ENCODE measurements at regions of chr13 and their contacts with region 1.

Region 1: DNA sequence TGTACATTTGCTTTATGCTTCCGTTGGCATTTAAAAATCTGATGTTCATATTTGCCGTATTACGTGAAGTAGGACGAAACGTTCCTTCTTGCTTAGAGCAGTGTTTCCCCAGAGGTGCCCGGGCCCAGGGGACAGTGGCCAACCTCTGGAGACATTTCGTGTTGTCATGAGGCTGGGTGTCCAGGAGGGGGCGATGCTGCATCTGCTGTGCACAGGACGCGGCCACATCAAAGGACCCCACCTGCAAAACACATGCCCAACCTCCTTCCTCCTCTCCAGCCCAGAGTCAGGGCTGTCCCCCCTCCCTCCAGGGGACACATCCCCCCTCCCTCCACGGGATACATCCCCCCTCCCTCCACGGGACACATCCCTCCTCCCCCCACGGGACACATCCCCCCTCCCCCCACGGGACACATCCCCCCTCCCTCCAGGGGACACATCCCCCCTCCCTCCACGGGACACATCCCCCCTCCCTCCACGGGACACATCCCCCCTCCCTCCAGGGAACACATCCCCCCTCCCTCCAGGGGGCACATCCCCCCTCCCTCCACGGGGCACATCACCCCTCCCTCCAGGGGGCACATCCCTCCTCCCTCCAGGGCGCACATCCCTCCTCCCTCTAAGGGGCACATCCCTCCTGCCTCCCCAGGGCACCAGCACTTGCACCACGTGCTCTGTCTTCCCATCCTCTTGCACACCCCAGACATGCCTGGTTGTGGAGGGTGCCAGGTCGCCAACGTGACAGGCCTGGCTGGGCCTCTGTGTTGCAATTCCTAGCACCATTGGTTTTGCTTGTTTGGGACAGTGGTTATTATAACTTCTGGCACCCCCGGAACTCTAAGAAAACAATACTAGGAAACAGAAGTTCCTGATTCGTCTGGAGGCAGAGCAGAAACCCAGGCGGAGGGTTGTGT is 46.7 kb downstream of the GAS6 start:
- DNase-seq: peak; percentile 95

Region 2: GRCh38 chr13:113802145-113802531 is 15.1 kb before region 1 on chr13:
- intact Hi-C with region 1: loop called in 1 of 2 experiments (anchors 2 kb)
- DNase-seq: peak; percentile 87

Region 3: GRCh38 chr13:113863436-113864272 is 46.5 kb after region 1 on chr13 and contains the start of gene GAS6:
- intact Hi-C with region 1: loop called in 1 of 2 experiments (anchors 5 kb)
- DNase-seq: peak; percentile 87
- total RNA-seq, gene GAS6: 201 to 215 TPM

Region 4: GRCh38 chr13:113904411-113904810 is 87.2 kb after region 1 on chr13:
- intact Hi-C with region 1: loop called in 1 of 2 experiments (anchors 5 kb)
- DNase-seq: peak; percentile 76

Region 5: GRCh38 chr13:113935001-113935844 is 118.0 kb after region 1 on chr13:
- intact Hi-C with region 1: loop called in 1 of 2 experiments (anchors 5 kb)
- DNase-seq: peak; percentile 84

Region 6: GRCh38 chr13:113951246-113951999 is 134.2 kb after region 1 on chr13:
- intact Hi-C with region 1: loop called in 1 of 2 experiments (anchors 2 kb)
- DNase-seq: peak; percentile 97

Region 7: DNA sequence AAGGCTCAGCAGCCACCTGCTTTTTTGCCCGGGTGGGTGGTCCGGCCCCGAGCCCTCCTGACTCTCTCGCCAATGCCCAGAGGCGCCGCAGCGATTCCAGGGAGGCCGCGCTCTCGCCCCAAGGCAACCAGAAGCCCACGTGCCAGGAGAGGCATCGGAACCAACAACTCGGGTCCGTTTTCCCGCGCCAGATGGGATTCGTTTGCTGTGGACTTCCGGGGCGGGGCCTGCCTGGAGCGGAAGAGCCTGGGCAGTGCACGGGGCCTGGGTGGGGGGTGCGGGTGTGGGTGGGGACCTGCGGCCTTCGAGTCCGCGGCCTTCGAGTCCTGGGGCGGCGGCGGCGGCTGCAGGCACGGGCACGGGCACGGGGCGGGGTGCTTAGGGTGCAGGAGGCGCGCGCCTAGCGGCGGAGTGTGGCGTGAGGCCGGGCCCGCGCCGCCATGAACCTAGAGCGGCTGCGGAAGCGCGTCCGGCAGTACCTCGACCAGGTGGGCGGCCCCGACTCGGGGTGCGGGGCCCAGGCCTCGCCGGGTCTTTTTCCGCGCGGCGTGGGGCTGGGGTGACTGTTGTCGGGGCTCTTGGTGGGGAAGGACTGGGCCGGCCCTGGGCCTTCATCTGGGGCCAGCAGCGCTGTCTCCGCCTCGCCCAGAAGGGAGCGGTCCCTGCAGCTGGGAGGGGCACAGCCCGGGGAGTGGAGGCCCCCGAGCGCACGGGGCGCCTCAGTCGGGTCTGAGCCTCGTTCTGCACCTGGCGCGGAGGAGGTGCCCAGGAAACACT is 417.6 kb after region 1 on chr13 and contains the start of gene CDC16:
- intact Hi-C with region 1: loop called in 1 of 2 experiments (anchors 5 kb)
- DNase-seq: peak; percentile 97
- total RNA-seq, gene CDC16: 46.8 TPM

Measured in posterior vena cava (tissue), 2 donors.